Activated CD8-positive, alpha-beta memory T cell treated with anti-CD3 and anti-CD28 coated beads, Interleukin-2, amount 10 ng/mL, durations not matched to agents 7 days and 5 days (primary cell): ENCODE measurements at regions of chr17 and their contacts with region 1.

Region 1: GRCh38 chr17:39621523-39622379 is 5.0 kb upstream of the PPP1R1B start:
- DNase-seq: peak; percentile 91
- ATAC-seq: peak; percentile 68
- H3K4me3 Mint-ChIP-seq: peak overlapping the region; percentile 77
- H3K27ac Mint-ChIP-seq: peak overlapping the region; percentile 98
- H3K4me1 Mint-ChIP-seq: peaks cover 23% of the 10 kb centered on the region
- H3K27me3 Mint-ChIP-seq: peaks cover 39% of the 10 kb centered on the region

Region 2: GRCh38 chr17:39573447-39574298 is 48.1 kb before region 1 on chr17:
- CTCF ChIA-PET with region 1: interaction called, 21 read pairs
- DNase-seq: peak; percentile 56
- ATAC-seq: peak; percentile 73
- H3K4me3 Mint-ChIP-seq: peak overlapping the region; percentile 57
- H3K27ac Mint-ChIP-seq: no peak overlapping the region
- H3K4me1 Mint-ChIP-seq: peaks cover 3% of the 10 kb centered on the region
- H3K27me3 Mint-ChIP-seq: peaks cover 12% of the 10 kb centered on the region

Region 3: GRCh38 chr17:39598047-39598481 is 23.7 kb before region 1 on chr17:
- CTCF ChIA-PET with region 1: interaction called, 29 read pairs
- DNase-seq: no peak
- ATAC-seq: no peak
- H3K4me3 Mint-ChIP-seq: no peak overlapping the region
- H3K27ac Mint-ChIP-seq: no peak overlapping the region
- H3K4me1 Mint-ChIP-seq: peaks cover 7% of the 10 kb centered on the region
- H3K27me3 Mint-ChIP-seq: peaks cover 92% of the 10 kb centered on the region

Region 4: GRCh38 chr17:39653662-39654331 is 32.0 kb after region 1 on chr17:
- CTCF ChIA-PET with region 1: interaction called, 307 read pairs
- DNase-seq: peak; percentile 87
- ATAC-seq: peak; percentile 89
- H3K4me3 Mint-ChIP-seq: no peak overlapping the region
- H3K27ac Mint-ChIP-seq: peak overlapping the region; percentile 24
- H3K4me1 Mint-ChIP-seq: peaks cover 12% of the 10 kb centered on the region
- H3K27me3 Mint-ChIP-seq: no peaks in the 10 kb centered on the region

Region 5: DNA sequence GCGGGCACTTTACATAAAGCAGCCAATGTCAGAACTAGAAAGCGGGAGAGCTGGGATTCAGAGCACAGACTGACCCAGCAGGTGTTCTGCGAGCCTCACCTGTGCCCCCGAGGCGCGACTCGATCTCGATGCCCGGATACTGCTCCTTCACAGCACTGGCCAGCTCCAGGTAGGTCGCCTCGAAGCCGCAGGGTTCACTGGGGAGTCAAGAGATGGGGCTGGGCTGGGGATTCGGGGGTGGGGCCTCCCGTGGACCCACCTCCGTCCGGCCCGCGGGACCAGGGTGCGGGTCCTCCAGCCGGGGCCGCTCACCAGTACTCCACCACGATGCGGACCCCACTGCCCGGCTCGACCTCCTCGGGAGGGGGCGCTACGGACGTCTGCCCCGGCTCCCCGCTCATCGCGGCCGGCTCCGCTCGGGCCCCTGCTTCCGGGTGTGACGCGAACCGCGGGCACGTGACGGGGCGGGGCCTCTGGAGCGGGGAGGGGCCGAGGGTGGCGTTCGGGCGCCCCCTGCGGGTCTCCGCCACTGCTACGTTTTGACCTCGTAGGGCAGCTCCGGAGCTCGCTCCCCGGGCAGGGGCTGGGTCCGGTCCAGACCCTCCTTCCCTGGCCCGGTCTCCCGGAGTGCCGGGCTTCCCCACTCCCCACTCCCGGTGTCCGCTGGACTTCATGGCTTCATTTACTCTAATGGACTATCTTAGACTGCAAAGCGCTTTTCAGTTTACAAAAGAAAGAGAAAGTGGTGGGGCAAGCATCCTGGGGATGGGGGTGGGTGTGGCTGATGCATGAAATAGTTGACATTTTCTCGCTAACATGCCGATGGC is 108.6 kb after region 1 on chr17 and contains the start of gene MIEN1:
- CTCF ChIA-PET with region 1: interaction called, 71 read pairs
- DNase-seq: peak; percentile 94
- ATAC-seq: peak; percentile 92
- H3K4me3 Mint-ChIP-seq: peak within 1 kb of the TSS; percentile 88
- H3K27ac Mint-ChIP-seq: peak within 1 kb of the TSS; percentile 84
- H3K4me1 Mint-ChIP-seq: peaks cover 19% of the 10 kb centered on the region
- H3K27me3 Mint-ChIP-seq: no peaks in the 10 kb centered on the region
- total RNA-seq, gene MIEN1: 45.9 to 46.8 TPM

Region 6: GRCh38 chr17:39872751-39873150 is 251.0 kb after region 1 on chr17:
- CTCF ChIA-PET with region 1: interaction called, 10 read pairs
- DNase-seq: no peak
- ATAC-seq: no peak
- H3K4me3 Mint-ChIP-seq: no peak overlapping the region
- H3K27ac Mint-ChIP-seq: no peak overlapping the region
- H3K4me1 Mint-ChIP-seq: peaks cover 13% of the 10 kb centered on the region
- H3K27me3 Mint-ChIP-seq: peaks cover 4% of the 10 kb centered on the region